Ascending aorta (tissue), 2 donors: ENCODE measurements at regions of chr2 and their contacts with region 1.

Region 1: GRCh38 chr2:69914170-69914960 is 544 bp upstream of the MXD1 start:
- DNase-seq: peak; percentile 100
- H3K4me3 ChIP-seq: peak overlapping the region; percentile 67 to 76
- H3K27ac ChIP-seq: peak overlapping the region; percentile 92
- H3K4me1 ChIP-seq: peaks cover 0 to 17% of the 10 kb centered on the region in 2 donors
- H3K27me3 ChIP-seq: no peaks in the 10 kb centered on the region
- CTCF ChIP-seq: peak in 2 of 3 experiments; percentile 15 to 20

Region 2: GRCh38 chr2:69985688-69986087 is 71.3 kb after region 1 on chr2:
- intact Hi-C with region 1: no loop called
- DNase-seq: peak; percentile 43 to 80
- H3K4me3 ChIP-seq: no peak overlapping the region
- H3K27ac ChIP-seq: no peak overlapping the region
- H3K4me1 ChIP-seq: no peaks in the 10 kb centered on the region
- H3K27me3 ChIP-seq: no peaks in the 10 kb centered on the region
- CTCF ChIP-seq: no peak

Region 3: DNA sequence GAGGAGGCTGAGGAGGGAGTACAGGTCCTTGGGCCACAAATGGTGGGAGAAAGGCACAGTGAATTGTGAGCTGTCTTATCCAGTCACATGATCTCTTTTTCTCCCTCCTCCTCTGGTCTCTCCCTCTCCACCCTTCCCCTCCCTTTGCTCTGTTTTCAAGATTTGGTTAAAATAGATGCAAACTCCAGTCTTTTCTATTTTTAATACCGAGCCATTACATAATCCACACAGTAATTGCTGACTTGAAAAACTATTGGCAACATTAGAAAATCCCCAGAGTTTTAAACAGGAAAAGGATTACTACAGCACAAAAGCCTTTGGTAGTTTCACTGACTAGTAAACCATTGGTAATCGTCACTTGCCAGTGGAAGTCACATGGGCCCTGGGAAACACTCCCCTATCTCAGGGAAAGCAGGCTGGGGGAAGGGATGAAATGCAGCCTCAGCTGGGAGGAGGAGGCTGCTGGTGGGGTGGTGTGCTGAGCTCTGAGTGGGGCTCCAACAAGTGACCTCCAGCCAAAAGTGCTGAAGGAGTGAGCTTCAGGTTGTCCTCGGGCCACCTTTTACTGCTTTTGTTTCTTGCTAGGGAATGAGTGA is 115.5 kb after region 1 on chr2:
- intact Hi-C with region 1: loop called (anchors 2 kb)
- DNase-seq: peak; percentile 51 to 90
- H3K4me3 ChIP-seq: peak overlapping the region in 1 of 2 donors; percentile 12
- H3K27ac ChIP-seq: peak overlapping the region; percentile 85 to 89
- H3K4me1 ChIP-seq: peaks cover 0 to 16% of the 10 kb centered on the region in 2 donors
- H3K27me3 ChIP-seq: no peaks in the 10 kb centered on the region
- CTCF ChIP-seq: no peak

Region 4: DNA sequence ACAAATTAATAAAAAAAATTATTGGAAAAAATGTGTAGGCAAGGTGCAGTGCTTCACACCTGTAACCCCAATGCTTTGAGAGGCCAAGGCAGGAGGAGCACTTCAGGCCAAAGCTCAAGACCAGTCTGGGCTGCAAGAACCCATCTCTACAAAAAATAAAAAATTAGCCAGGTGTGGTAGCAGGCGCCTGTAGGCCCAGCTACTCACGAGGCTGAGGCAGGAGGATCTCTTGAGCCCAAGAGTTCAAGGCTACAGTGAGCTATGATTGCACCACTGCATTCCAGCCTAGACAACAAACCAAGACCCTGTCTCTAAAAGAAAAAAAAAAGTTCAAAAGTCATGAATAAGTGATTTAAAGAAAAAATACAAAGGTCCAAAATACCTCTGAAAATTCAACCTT is 136.3 kb after region 1 on chr2:
- intact Hi-C with region 1: no loop called
- DNase-seq: no peak
- H3K4me3 ChIP-seq: no peak overlapping the region
- H3K27ac ChIP-seq: no peak overlapping the region
- H3K4me1 ChIP-seq: no peaks in the 10 kb centered on the region
- H3K27me3 ChIP-seq: no peaks in the 10 kb centered on the region
- CTCF ChIP-seq: no peak

Region 5: GRCh38 chr2:70086838-70087701 is 172.7 kb after region 1 on chr2 and contains the start of gene PCBP1:
- intact Hi-C with region 1: loop called (anchors 1 kb)
- DNase-seq: peak; percentile 74 to 96
- H3K4me3 ChIP-seq: peak within 1 kb of the TSS; percentile 78 to 91
- H3K27ac ChIP-seq: peak within 1 kb of the TSS; percentile 98 to 99
- H3K4me1 ChIP-seq: peaks cover 5 to 29% of the 10 kb centered on the region in 2 donors
- H3K27me3 ChIP-seq: no peaks in the 10 kb centered on the region
- CTCF ChIP-seq: no peak
- total RNA-seq, gene PCBP1: 227 TPM

Region 6: GRCh38 chr2:70190418-70191243 is 276.3 kb after region 1 on chr2 and contains the start of gene C2orf42:
- intact Hi-C with region 1: loop called (anchors 1 kb)
- DNase-seq: peak; percentile 85 to 98
- H3K4me3 ChIP-seq: peak within 1 kb of the TSS; percentile 67 to 82
- H3K27ac ChIP-seq: peak within 1 kb of the TSS; percentile 96 to 97
- H3K4me1 ChIP-seq: peaks cover 0 to 4% of the 10 kb centered on the region in 2 donors
- H3K27me3 ChIP-seq: no peaks in the 10 kb centered on the region
- CTCF ChIP-seq: no peak
- total RNA-seq, gene C2orf42: 9.5 TPM

Region 7: GRCh38 chr2:70258532-70258874 is 344.1 kb after region 1 on chr2:
- intact Hi-C with region 1: loop called (anchors 1 kb)
- DNase-seq: peak in 1 of 2 donors; percentile 78
- H3K4me3 ChIP-seq: peak overlapping the region; percentile 93 to 97
- H3K27ac ChIP-seq: peak overlapping the region; percentile 88 to 91
- H3K4me1 ChIP-seq: peaks cover 4 to 17% of the 10 kb centered on the region in 2 donors
- H3K27me3 ChIP-seq: no peaks in the 10 kb centered on the region
- CTCF ChIP-seq: no peak

Region 8: GRCh38 chr2:71226965-71227560 is 1312.7 kb after region 1 on chr2 and contains the start of gene PAIP2B:
- intact Hi-C with region 1: loop called (anchors 10 kb)
- DNase-seq: peak; percentile 97 to 99
- H3K4me3 ChIP-seq: peak within 1 kb of the TSS; percentile 67 to 85
- H3K27ac ChIP-seq: peak within 1 kb of the TSS; percentile 46 to 80
- H3K4me1 ChIP-seq: peaks cover 0 to 13% of the 10 kb centered on the region in 2 donors
- H3K27me3 ChIP-seq: no peaks in the 10 kb centered on the region
- CTCF ChIP-seq: no peak
- total RNA-seq, gene PAIP2B: 0.32 TPM